ENCODE measurements at regions of chr5 and their contacts with region 1.

Region 1: GRCh38 chr5:135457424-135458071 is 5.4 kb upstream of the TIFAB start:
- DNase-seq: peak; percentile 76
- H3K4me3 Mint-ChIP-seq: no peak overlapping the region
- H3K27ac Mint-ChIP-seq: no peak overlapping the region
- H3K4me1 Mint-ChIP-seq: peaks cover 2% of the 10 kb centered on the region
- H3K27me3 Mint-ChIP-seq: peaks cover 3% of the 10 kb centered on the region

Region 2: DNA sequence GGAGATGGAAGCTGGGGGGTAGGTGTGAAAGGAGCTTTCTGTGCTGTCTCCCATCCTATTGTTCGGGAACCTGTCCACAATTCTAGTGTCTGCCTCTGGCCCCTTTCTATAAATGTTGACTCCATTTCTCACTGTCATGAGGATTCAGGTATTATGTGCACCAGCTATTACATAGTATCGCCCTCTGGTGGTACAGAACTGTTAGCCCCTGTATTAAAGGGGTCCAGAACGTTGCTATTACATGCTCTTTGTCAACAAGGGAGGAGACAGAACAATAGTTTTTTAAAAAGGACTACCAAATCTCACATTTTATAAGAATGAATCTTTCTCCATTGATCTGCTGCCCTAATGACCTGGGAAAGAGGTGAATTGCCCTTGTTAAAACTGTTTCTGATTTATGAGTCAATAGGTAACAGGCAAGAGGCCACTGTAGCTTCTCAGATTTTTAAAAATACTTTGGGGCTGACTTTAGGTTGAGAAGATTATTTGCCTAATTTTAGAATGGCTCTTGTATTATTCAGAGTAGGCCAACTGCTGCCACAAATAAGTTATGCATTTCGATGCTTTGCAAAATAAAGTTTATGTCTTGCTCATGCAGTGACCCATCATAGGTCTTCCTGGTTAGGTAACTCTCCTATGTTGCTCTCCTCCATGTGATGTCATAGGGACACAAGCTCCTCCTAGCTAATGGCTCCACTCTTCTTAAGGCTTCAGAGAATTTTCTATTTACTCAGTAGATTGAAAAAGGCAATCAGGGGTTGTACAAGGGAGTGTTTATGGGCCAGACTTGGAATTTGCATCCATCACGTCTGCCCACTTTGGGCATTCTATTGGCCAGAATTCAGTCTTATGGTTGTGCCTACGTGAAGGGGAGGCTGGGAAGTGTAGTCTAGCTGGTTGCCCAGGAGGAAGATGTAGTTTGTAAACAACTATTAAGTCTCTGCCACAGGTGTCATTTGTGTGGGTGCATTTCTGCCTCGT is 31.2 kb before region 1 on chr5:
- CTCF ChIA-PET with region 1: interaction called, 10 read pairs
- intact Hi-C with region 1: no loop called
- DNase-seq: peak; percentile 42
- H3K4me3 Mint-ChIP-seq: no peak overlapping the region
- H3K27ac Mint-ChIP-seq: no peak overlapping the region
- H3K4me1 Mint-ChIP-seq: peaks cover 3% of the 10 kb centered on the region
- H3K27me3 Mint-ChIP-seq: no peaks in the 10 kb centered on the region

Region 3: GRCh38 chr5:135437796-135438560 is 19.6 kb before region 1 on chr5:
- CTCF ChIA-PET with region 1: interaction called, 17 read pairs
- intact Hi-C with region 1: no loop called
- DNase-seq: no peak
- H3K4me3 Mint-ChIP-seq: no peak overlapping the region
- H3K27ac Mint-ChIP-seq: no peak overlapping the region
- H3K4me1 Mint-ChIP-seq: no peaks in the 10 kb centered on the region
- H3K27me3 Mint-ChIP-seq: no peaks in the 10 kb centered on the region

Region 4: DNA sequence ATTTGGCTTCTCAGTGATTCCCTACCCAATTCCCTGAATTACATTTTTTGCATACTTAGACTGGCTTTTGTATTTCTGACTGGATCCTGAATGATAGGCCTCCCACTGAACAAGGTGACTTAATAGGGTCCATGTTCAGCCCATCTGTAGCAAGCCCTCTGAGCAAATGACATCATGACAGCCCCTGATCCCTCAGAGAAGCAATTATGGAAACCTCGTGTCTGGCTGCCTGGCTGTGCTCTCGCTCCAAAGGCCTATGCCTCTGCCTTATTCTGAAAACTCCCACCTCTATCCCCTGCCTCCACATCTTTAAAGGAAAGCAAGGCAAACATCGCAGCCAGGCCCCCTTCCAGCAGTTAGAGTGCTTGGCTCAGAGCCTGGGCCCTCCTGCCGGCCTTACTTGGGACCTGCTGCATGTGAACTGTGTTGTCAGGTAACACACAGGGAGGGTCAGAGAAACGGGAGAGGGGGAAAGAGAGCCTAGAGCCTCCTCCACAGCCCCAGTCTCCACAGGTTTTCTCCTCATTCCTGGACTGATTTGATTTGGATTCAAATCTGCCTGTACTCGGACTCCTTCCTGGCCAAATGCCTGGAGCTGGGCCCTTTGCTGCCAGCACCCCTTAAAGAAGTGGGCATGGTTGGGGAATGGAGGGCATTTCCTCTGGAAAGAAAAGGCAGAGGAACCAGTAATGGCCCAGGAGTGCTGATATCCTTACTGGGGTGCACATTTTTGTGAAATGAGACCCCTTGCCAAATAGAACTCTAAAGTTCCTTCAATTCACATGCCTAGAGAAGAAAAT is 14.2 kb before region 1 on chr5:
- CTCF ChIA-PET with region 1: interaction called, 34 read pairs
- intact Hi-C with region 1: no loop called
- DNase-seq: no peak
- H3K4me3 Mint-ChIP-seq: no peak overlapping the region
- H3K27ac Mint-ChIP-seq: no peak overlapping the region
- H3K4me1 Mint-ChIP-seq: no peaks in the 10 kb centered on the region
- H3K27me3 Mint-ChIP-seq: no peaks in the 10 kb centered on the region

Region 5: GRCh38 chr5:135560858-135561257 is 103.3 kb after region 1 on chr5:
- CTCF ChIA-PET with region 1: interaction called, 438 read pairs
- intact Hi-C with region 1: no loop called
- DNase-seq: peak; percentile 88
- H3K4me3 Mint-ChIP-seq: no peak overlapping the region
- H3K27ac Mint-ChIP-seq: no peak overlapping the region
- H3K4me1 Mint-ChIP-seq: peaks cover 4% of the 10 kb centered on the region
- H3K27me3 Mint-ChIP-seq: peaks cover 29% of the 10 kb centered on the region

Region 6: GRCh38 chr5:135565725-135566421 is 108.3 kb after region 1 on chr5:
- CTCF ChIA-PET with region 1: interaction called, 39 read pairs
- intact Hi-C with region 1: no loop called
- DNase-seq: peak; percentile 81
- H3K4me3 Mint-ChIP-seq: no peak overlapping the region
- H3K27ac Mint-ChIP-seq: no peak overlapping the region
- H3K4me1 Mint-ChIP-seq: peaks cover 1% of the 10 kb centered on the region
- H3K27me3 Mint-ChIP-seq: peaks cover 9% of the 10 kb centered on the region